ENCODE measurements at regions of chr15 and their contacts with region 1.

Region 1: GRCh38 chr15:67080900-67081431 is 15.6 kb downstream of the SMAD3 start:
- DNase-seq: peak; percentile 98
- H3K4me3 ChIP-seq: peak overlapping the region; percentile 54
- H3K27ac ChIP-seq: peak overlapping the region; percentile 99
- H3K4me1 ChIP-seq: peaks cover 97% of the 10 kb centered on the region
- CTCF ChIP-seq: peak; percentile 82

Region 2: GRCh38 chr15:66946578-66947164 is 134.3 kb before region 1 on chr15:
- CTCF ChIA-PET with region 1: no interaction called
- POLR2A ChIA-PET with region 1: no interaction called
- intact Hi-C with region 1: loop called (anchors 1 kb)
- DNase-seq: peak; percentile 76
- H3K4me3 ChIP-seq: no peak overlapping the region
- H3K27ac ChIP-seq: no peak overlapping the region
- H3K4me1 ChIP-seq: peaks cover 19% of the 10 kb centered on the region
- CTCF ChIP-seq: peak; percentile 96

Region 3: GRCh38 chr15:67024314-67024997 is 56.5 kb before region 1 on chr15:
- CTCF ChIA-PET with region 1: no interaction called
- POLR2A ChIA-PET with region 1: no interaction called
- intact Hi-C with region 1: no loop called
- DNase-seq: no peak
- H3K4me3 ChIP-seq: no peak overlapping the region
- H3K27ac ChIP-seq: no peak overlapping the region
- H3K4me1 ChIP-seq: no peaks in the 10 kb centered on the region
- CTCF ChIP-seq: no peak

Region 4: GRCh38 chr15:67091071-67091979 is 10.4 kb after region 1 on chr15:
- CTCF ChIA-PET with region 1: no interaction called
- POLR2A ChIA-PET with region 1: interaction called, 80 read pairs
- intact Hi-C with region 1: loop called (anchors 1 kb)
- DNase-seq: no peak
- H3K4me3 ChIP-seq: peak overlapping the region; percentile 48
- H3K27ac ChIP-seq: peak overlapping the region; percentile 97
- H3K4me1 ChIP-seq: peaks cover 96% of the 10 kb centered on the region
- CTCF ChIP-seq: no peak

Region 5: GRCh38 chr15:67134067-67134838 is 53.3 kb after region 1 on chr15:
- CTCF ChIA-PET with region 1: no interaction called
- POLR2A ChIA-PET with region 1: interaction called, 6 read pairs
- intact Hi-C with region 1: loop called (anchors 5 kb)
- DNase-seq: peak; percentile 82
- H3K4me3 ChIP-seq: peak overlapping the region; percentile 59
- H3K27ac ChIP-seq: peak overlapping the region; percentile 76
- H3K4me1 ChIP-seq: peaks cover 62% of the 10 kb centered on the region
- CTCF ChIP-seq: no peak

Region 6: DNA sequence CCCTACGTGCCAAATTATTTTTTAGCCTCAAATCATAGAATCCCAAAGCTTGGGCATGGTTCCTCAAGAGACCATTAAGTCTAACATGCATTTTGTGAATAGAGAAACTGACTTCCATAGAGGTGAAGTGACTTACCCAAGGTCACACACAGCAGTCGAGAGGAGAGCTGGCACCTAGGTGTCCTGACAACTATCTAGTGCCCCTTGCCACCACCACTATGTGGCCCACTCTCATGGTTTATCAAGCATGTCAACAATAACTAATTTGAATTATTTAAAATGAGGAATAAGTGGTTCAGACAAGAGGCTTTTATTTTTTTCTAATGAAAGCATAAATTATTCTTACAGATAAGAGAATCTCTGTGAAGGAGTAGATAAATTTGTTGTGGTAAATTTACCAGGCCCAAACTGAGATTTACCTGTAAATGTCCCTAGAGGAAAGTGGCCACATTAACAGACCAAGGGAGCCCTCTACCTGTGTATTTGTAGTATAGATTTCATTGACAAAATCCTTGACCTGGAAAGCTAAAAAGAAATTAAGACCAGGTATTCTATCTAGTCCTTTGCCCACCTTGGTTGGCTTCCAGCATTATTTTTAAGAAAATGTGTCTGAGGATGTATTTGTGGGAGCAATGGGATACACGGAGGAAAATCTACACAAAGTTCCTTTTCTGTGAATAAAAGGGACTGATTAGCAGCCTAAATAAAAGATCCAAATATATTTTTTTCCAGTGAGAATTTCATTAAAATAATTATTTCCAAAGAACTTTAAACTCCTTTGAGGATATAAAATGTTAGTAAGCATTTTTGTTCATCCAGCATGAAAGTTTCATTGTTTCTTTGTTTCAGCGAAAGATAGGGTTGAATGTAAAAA is 222.8 kb after region 1 on chr15:
- CTCF ChIA-PET with region 1: no interaction called
- POLR2A ChIA-PET with region 1: interaction called, 3 read pairs
- intact Hi-C with region 1: loop called (anchors 1 kb)
- DNase-seq: peak; percentile 73
- H3K4me3 ChIP-seq: no peak overlapping the region
- H3K27ac ChIP-seq: no peak overlapping the region
- H3K4me1 ChIP-seq: peaks cover 2% of the 10 kb centered on the region
- CTCF ChIP-seq: peak; percentile 93

Measured in OCI-LY7 (cell line).